Posterior cingulate gyrus (tissue), 11 donors: ENCODE measurements at regions of chr1 and their contacts with region 1.

Region 1: DNA sequence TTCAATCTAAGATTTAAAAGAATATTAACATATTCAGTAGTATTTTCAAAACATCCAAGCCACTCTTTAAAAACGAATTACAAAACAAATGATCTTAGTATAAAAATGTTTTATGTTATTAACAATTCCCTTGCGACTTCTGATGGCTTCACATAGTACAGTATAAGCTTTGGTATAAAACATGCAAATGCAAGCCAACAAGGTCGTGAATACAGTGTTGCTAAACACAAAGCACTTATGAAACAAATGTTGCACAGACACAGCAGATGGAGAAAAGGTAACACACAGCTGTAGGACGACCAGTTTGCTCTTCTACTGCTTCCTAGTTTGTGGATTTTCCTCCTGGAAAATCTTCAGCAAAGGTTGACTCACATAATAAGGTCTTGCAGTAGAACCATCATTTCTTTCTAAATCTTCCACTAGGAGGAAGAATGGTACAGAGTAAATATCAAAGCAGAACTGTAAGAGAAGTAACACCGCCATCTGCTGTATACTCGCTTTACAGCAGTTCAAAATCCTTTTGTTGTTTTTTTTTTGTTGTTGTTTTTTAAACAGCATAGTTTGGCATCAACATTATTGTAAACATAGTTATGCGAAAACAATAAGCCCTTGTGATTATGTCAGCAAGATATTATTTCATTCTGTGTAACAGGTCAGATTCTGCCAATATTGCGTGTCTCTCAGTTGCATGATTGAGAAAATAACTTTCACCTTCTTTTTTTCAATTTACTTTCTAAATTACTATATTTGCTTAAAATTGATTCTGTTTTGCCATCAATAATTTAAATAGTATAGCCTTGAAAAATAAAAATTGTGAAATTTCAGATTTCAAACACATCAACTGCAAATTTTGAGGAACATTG is 69.5 kb downstream of the LHX8 start:
- DNase-seq: no peak

Region 2: GRCh38 chr1:74771913-74772515 is 431.6 kb before region 1 on chr1:
- intact Hi-C with region 1: loop called (anchors 1 kb)
- DNase-seq: peak in 2 of 10 donors; percentile 11 to 13

Region 3: DNA sequence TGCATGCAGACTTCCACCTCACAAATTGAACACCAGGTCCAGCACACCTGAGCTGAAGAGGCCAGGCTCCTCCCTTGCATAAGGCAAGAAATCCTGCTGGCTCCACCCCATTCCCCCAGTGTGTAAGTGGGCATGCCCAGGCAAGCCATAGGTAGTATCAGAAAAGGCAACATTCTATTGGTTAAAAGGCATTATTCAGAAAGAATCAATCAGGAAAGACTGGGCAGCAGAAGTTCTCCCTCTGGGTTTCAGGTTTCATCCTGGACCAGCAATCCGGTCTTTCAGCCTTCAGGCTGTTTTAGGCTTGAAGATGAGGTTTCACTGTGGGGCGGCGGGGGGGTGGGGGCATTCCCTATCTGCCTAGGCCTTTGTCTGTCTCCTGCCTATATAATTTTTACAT is 111.5 kb before region 1 on chr1:
- intact Hi-C with region 1: no loop called
- DNase-seq: no peak

Region 4: DNA sequence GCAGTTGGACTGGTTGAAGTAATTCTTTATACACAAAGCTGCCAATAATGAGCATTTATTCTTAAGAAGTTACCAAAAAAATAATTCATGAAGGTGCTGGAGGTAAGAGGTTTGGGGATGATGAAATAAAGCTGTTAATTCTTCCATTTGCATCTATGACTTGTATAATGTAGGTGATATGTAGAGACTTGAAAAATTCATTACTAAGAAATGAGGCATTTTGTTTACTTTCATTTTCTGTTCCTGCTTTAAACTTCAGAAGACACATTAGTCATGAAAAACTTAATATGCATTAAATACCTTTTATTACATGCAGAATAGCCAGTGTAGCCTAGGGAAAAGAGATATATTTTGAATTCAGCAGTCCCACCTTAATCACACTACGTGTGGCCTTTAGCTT is 193.1 kb after region 1 on chr1:
- intact Hi-C with region 1: no loop called
- DNase-seq: no peak